CD4-positive, alpha-beta memory T cell (primary cell): ENCODE measurements at regions of chr12 and their contacts with region 1.

Region 1: GRCh38 chr12:14769969-14770495 is 33.2 kb downstream of the WBP11 start:
- DNase-seq: peak; percentile 87 to 94 (median 90)
- H3K4me3 ChIP-seq: peak overlapping the region; percentile 88 to 92
- H3K4me3 Mint-ChIP-seq: peak overlapping the region; percentile 94 to 99 (median 97)
- H3K27ac ChIP-seq: peak overlapping the region; percentile 98
- H3K27ac Mint-ChIP-seq: peak overlapping the region; percentile 97 to 100 (median 99)
- H3K4me1 ChIP-seq: peaks cover 50% of the 10 kb centered on the region
- H3K4me1 Mint-ChIP-seq: peaks cover 30 to 83% (median 50%) of the 10 kb centered on the region in 4 donors
- H3K27me3 ChIP-seq: no peaks in the 10 kb centered on the region
- H3K27me3 Mint-ChIP-seq: no peaks in the 10 kb centered on the region

Region 2: GRCh38 chr12:14365294-14366208 is 404.5 kb before region 1 on chr12 and contains the start of gene ATF7IP:
- CTCF ChIA-PET with region 1: interaction called, 11 read pairs
- POLR2A ChIA-PET with region 1: interaction called, 69 read pairs
- intact Hi-C with region 1: loop called (anchors 1 kb)
- DNase-seq: peak; percentile 95 to 97 (median 97)
- H3K4me3 ChIP-seq: peak within 1 kb of the TSS; percentile 45 to 81
- H3K4me3 Mint-ChIP-seq: peak within 1 kb of the TSS; percentile 82 to 99 (median 92)
- H3K27ac ChIP-seq: peak within 1 kb of the TSS; percentile 90
- H3K27ac Mint-ChIP-seq: peak within 1 kb of the TSS; percentile 85 to 99 (median 96)
- H3K4me1 ChIP-seq: peaks cover 34% of the 10 kb centered on the region
- H3K4me1 Mint-ChIP-seq: peaks cover 11 to 55% (median 29%) of the 10 kb centered on the region in 4 donors
- H3K27me3 ChIP-seq: no peaks in the 10 kb centered on the region
- H3K27me3 Mint-ChIP-seq: no peaks in the 10 kb centered on the region
- total RNA-seq, gene ATF7IP: 209 to 223 TPM

Region 3: DNA sequence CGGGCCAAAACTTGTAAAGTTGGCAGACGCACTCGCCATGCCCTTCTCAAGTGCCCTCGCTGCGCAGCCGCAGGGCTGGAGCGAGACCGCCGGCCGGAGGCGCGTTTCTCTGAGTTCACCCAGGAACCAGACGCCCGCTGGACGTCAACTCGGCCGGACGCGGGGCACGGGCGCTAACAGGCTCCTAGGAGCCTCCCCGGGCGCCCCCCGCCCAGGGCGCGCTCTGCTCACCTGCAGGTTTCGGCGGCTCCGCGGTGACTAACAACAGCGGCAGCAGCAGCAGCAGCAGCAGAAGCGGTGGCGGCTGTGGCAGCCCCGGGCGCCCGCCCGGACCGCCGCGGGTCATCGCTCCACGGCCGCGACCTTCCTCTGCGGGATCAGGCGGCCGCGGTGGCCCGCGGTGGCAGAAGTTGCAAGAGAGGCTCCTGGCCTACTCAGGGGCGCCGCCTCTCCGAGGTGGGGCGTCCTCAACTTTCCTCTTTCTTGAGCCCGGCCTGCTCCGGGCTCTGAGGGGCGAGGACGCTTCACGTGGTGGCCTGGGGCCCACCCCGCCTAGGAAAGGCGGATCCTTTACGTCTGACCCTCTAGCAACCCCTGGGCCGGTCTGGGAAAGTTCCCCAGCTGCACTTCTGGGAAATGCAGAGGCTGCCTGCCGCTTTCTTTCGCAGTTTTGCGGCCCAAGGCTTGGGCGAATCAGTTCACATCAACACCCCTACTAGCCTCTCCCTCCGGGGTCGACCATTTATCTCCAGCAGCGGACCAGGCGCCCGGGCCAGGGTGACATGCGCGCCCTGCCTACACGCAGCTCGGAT is 202.5 kb before region 1 on chr12 and contains the start of gene PLBD1:
- CTCF ChIA-PET with region 1: no interaction called
- POLR2A ChIA-PET with region 1: no interaction called
- intact Hi-C with region 1: no loop called
- DNase-seq: no peak
- H3K4me3 ChIP-seq: no peak within 1 kb of the TSS
- H3K4me3 Mint-ChIP-seq: peak within 1 kb of the TSS in 7 of 8 donors; percentile 1 to 66 (median 47)
- H3K27ac ChIP-seq: no peak within 1 kb of the TSS
- H3K27ac Mint-ChIP-seq: no peak within 1 kb of the TSS
- H3K4me1 ChIP-seq: no peaks in the 10 kb centered on the region
- H3K4me1 Mint-ChIP-seq: peaks cover 0 to 6% (median 4%) of the 10 kb centered on the region in 4 donors
- H3K27me3 ChIP-seq: no peaks in the 10 kb centered on the region
- H3K27me3 Mint-ChIP-seq: peaks cover 19 to 39% of the 10 kb centered on the region in 2 donors
- total RNA-seq, gene PLBD1: 0.47 to 0.67 TPM

Region 4: GRCh38 chr12:14782756-14783155 is 12.7 kb after region 1 on chr12:
- CTCF ChIA-PET with region 1: interaction called, 20 read pairs
- POLR2A ChIA-PET with region 1: interaction called, 41 read pairs
- intact Hi-C with region 1: loop called (anchors 1 kb)
- DNase-seq: no peak
- H3K4me3 ChIP-seq: no peak overlapping the region
- H3K4me3 Mint-ChIP-seq: no peak overlapping the region
- H3K27ac ChIP-seq: no peak overlapping the region
- H3K27ac Mint-ChIP-seq: peak overlapping the region in 1 of 7 donors; percentile 30
- H3K4me1 ChIP-seq: no peaks in the 10 kb centered on the region
- H3K4me1 Mint-ChIP-seq: peaks cover 0 to 5% (median 3%) of the 10 kb centered on the region in 4 donors
- H3K27me3 ChIP-seq: no peaks in the 10 kb centered on the region
- H3K27me3 Mint-ChIP-seq: no peaks in the 10 kb centered on the region

Region 5: DNA sequence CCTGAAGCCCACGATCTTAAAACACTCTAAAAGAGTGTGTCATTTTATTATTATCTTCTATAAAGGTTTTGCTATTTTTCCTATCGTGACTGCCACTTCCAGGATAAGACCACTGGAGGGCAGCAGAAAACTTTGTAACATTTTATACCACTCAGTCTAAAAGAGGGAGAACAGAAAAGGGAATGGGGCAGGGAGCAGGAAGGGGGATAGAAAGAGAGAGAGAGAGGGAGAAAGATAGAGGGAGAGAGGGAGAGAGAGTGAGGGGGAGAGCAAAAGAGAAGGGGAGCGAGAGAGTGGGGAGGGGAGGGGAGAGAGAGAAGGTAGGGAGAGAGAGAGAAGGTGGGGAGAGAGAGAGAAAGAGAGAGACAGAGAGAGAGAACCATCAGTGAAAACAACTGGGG is 75.3 kb after region 1 on chr12:
- CTCF ChIA-PET with region 1: interaction called, 3 read pairs
- POLR2A ChIA-PET with region 1: interaction called, 3 read pairs
- intact Hi-C with region 1: loop called (anchors 2 kb)
- DNase-seq: peak in 4 of 5 donors; percentile 50 to 59 (median 56)
- H3K4me3 ChIP-seq: no peak overlapping the region
- H3K4me3 Mint-ChIP-seq: peak overlapping the region in 1 of 8 donors; percentile 11
- H3K27ac ChIP-seq: no peak overlapping the region
- H3K27ac Mint-ChIP-seq: no peak overlapping the region
- H3K4me1 ChIP-seq: peaks cover 3% of the 10 kb centered on the region
- H3K4me1 Mint-ChIP-seq: peaks cover 0 to 5% (median 1%) of the 10 kb centered on the region in 4 donors
- H3K27me3 ChIP-seq: no peaks in the 10 kb centered on the region
- H3K27me3 Mint-ChIP-seq: no peaks in the 10 kb centered on the region

Region 6: DNA sequence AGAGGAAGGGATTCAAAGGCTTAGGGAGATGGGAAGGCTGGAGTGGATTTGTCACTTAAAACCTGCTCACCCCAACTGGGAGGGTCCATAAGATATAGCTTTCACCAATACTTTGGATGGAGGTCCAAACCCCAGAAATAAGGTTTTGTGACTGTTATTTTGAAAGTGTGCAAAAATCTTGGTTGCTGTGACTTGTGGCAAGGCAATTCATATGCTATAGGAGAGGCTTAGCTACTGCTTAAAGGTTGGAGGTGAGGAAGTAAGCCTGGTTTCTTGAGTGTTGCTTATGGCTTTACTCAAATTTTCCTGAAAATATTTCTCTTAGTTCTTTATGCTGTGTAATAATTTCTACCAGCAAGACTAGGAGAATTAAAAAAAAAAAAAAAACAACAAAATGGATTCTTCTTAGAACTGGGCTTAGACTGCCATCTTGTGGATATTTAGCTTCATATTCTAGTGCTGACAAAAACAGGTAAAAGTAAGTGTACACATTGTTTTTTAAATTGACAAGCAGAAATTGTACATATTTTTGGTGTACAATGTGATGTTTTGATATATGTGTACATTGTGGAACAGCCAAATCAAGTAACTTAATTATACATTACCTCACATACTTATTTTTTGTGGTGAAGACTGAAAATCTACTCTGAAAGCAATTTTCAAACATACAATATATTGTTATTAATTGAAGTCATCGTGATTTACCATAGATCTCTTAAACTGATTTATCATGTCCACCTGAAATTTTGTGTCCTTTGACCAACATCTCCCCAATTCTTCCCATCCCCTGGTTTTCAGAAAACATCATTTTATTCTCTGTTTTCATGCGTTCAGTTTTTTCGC is 225.8 kb after region 1 on chr12:
- CTCF ChIA-PET with region 1: interaction called, 15 read pairs
- POLR2A ChIA-PET with region 1: interaction called, 17 read pairs
- intact Hi-C with region 1: loop called (anchors 2 kb)
- DNase-seq: peak in 4 of 5 donors; percentile 59 to 74 (median 64)
- H3K4me3 ChIP-seq: no peak overlapping the region
- H3K4me3 Mint-ChIP-seq: peak overlapping the region in 3 of 8 donors; percentile 47 to 65 (median 64)
- H3K27ac ChIP-seq: no peak overlapping the region
- H3K27ac Mint-ChIP-seq: peak overlapping the region; percentile 8 to 89 (median 58)
- H3K4me1 ChIP-seq: peaks cover 24% of the 10 kb centered on the region
- H3K4me1 Mint-ChIP-seq: peaks cover 22 to 28% (median 25%) of the 10 kb centered on the region in 4 donors
- H3K27me3 ChIP-seq: peaks cover 3% of the 10 kb centered on the region
- H3K27me3 Mint-ChIP-seq: peaks cover 4 to 5% of the 10 kb centered on the region in 2 donors

Region 7: GRCh38 chr12:15882118-15882971 is 1112.3 kb after region 1 on chr12 and contains the start of gene STRAP:
- CTCF ChIA-PET with region 1: no interaction called
- POLR2A ChIA-PET with region 1: no interaction called
- intact Hi-C with region 1: loop called (anchors 1 kb)
- DNase-seq: peak; percentile 96 to 97 (median 97)
- H3K4me3 ChIP-seq: peak within 1 kb of the TSS; percentile 90 to 98
- H3K4me3 Mint-ChIP-seq: peak within 1 kb of the TSS; percentile 96 to 99 (median 98)
- H3K27ac ChIP-seq: peak within 1 kb of the TSS; percentile 95
- H3K27ac Mint-ChIP-seq: peak within 1 kb of the TSS; percentile 99 to 100 (median 100)
- H3K4me1 ChIP-seq: peaks cover 51% of the 10 kb centered on the region
- H3K4me1 Mint-ChIP-seq: peaks cover 38 to 66% (median 53%) of the 10 kb centered on the region in 4 donors
- H3K27me3 ChIP-seq: no peaks in the 10 kb centered on the region
- H3K27me3 Mint-ChIP-seq: no peaks in the 10 kb centered on the region
- total RNA-seq, gene STRAP: 46.1 to 49.1 TPM